ENCODE measurements at regions of chr2 and their contacts with region 1.

Region 1: GRCh38 chr2:172427256-172427989 is at the start of gene ITGA6:
- DNase-seq: peak; percentile 90
- H3K4me3 ChIP-seq: peak within 1 kb of the TSS; percentile 90
- H3K4me3 Mint-ChIP-seq: peak within 1 kb of the TSS; percentile 70
- H3K27ac Mint-ChIP-seq: peak within 1 kb of the TSS; percentile 84
- H3K4me1 ChIP-seq: peaks cover 25% of the 10 kb centered on the region
- H3K4me1 Mint-ChIP-seq: no peaks in the 10 kb centered on the region
- H3K27me3 ChIP-seq: no peaks in the 10 kb centered on the region
- H3K27me3 Mint-ChIP-seq: no peaks in the 10 kb centered on the region
- CTCF ChIP-seq: peak in 1 of 2 experiments; percentile 17
- total RNA-seq, gene ITGA6: 27.8 and 33.0 TPM in 2 replicates

Region 2: DNA sequence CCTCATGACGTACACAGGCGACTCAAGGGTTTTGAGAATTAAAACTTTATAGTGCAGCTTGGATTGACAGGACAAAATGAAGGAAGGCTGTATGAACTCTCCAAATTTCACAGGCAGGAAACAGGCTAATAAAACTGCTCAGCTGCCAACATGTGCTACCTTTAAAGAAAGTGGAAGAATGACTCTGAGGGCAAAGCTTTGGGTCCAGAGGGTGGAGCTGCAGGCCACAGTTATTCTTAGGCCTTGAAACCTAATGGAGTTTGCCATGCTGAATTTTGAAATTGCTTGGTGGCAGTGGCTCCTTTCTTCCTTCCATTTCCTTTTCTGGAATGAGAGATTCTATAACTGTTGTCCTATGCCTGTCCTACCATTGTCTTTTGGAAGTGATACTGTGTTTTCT is 470.4 kb before region 1 on chr2:
- CTCF ChIA-PET with region 1: no interaction called
- POLR2A ChIA-PET with region 1: no interaction called
- intact Hi-C with region 1: no loop called
- DNase-seq: peak in 1 of 2 experiments; percentile 15
- H3K4me3 ChIP-seq: no peak overlapping the region
- H3K4me3 Mint-ChIP-seq: no peak overlapping the region
- H3K27ac Mint-ChIP-seq: no peak overlapping the region
- H3K4me1 ChIP-seq: no peaks in the 10 kb centered on the region
- H3K4me1 Mint-ChIP-seq: no peaks in the 10 kb centered on the region
- H3K27me3 ChIP-seq: no peaks in the 10 kb centered on the region
- H3K27me3 Mint-ChIP-seq: no peaks in the 10 kb centered on the region
- CTCF ChIP-seq: no peak

Region 3: GRCh38 chr2:172242961-172243360 is 184.5 kb before region 1 on chr2:
- CTCF ChIA-PET with region 1: no interaction called
- POLR2A ChIA-PET with region 1: no interaction called
- intact Hi-C with region 1: loop called (anchors 1 kb)
- DNase-seq: no peak
- H3K4me3 ChIP-seq: no peak overlapping the region
- H3K4me3 Mint-ChIP-seq: no peak overlapping the region
- H3K27ac Mint-ChIP-seq: no peak overlapping the region
- H3K4me1 ChIP-seq: no peaks in the 10 kb centered on the region; the same call in 1 of the 2 replicates
- H3K4me1 Mint-ChIP-seq: no peaks in the 10 kb centered on the region
- H3K27me3 ChIP-seq: no peaks in the 10 kb centered on the region
- H3K27me3 Mint-ChIP-seq: peaks cover under 1% of the 10 kb centered on the region
- CTCF ChIP-seq: no peak

Region 4: GRCh38 chr2:172442072-172442895 is 14.9 kb after region 1 on chr2:
- CTCF ChIA-PET with region 1: interaction called, 13 read pairs
- POLR2A ChIA-PET with region 1: interaction called, 16 read pairs
- intact Hi-C with region 1: loop called (anchors 1 kb)
- DNase-seq: peak; percentile 76 to 89
- H3K4me3 ChIP-seq: no peak overlapping the region
- H3K4me3 Mint-ChIP-seq: peak overlapping the region; percentile 55
- H3K27ac Mint-ChIP-seq: peak overlapping the region; percentile 89
- H3K4me1 ChIP-seq: peaks cover 63% of the 10 kb centered on the region
- H3K4me1 Mint-ChIP-seq: peaks cover 37% of the 10 kb centered on the region
- H3K27me3 ChIP-seq: no peaks in the 10 kb centered on the region
- H3K27me3 Mint-ChIP-seq: no peaks in the 10 kb centered on the region
- CTCF ChIP-seq: no peak

Region 5: DNA sequence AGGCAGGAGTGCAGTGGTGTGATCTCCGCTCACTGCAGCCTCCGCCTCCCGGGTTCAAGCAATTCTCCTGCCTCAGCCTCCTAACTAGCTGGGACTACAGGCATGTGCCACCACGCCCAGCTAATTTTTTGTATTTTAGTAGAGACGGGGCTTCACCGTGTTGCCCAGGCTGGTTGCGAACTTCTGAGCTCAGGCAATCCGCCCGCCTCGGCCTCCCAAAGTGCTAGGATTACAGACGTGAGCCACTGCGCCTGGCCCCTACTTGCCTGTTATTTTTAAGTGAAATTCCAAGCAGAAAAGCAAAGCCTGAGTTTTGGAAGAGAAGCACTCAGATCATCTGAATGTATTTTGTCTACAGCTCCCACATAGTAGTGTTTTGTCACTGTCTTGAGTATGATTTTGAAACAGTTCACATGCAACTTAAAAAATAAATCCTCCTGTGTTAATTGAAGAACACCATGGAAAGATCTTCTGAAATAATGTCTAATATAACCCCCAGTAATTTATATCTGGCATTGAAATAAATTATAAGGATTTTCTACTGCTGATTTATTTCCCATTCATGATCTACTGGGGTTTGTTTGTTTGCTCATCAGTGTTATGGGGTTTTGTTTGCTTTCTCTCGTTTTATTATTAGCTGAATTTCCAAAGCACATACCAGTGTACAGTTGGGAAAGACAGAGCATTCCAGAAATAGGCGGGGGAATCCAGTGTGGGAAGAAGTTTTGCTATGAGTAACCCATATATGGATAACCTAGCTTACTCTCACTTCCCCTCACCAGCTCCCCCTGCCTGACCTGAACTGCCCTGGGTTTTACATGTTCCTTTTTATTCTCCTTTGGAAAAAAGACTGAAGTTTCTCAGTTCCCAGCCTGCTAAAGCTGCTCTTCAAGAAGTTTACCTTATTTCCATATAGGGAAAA is 568.2 kb after region 1 on chr2:
- CTCF ChIA-PET with region 1: no interaction called
- POLR2A ChIA-PET with region 1: no interaction called
- intact Hi-C with region 1: no loop called
- DNase-seq: peak; percentile 79 to 87
- H3K4me3 ChIP-seq: no peak overlapping the region
- H3K4me3 Mint-ChIP-seq: peak overlapping the region; percentile 15
- H3K27ac Mint-ChIP-seq: peak overlapping the region; percentile 69
- H3K4me1 ChIP-seq: peaks cover 16% of the 10 kb centered on the region
- H3K4me1 Mint-ChIP-seq: peaks cover 39% of the 10 kb centered on the region
- H3K27me3 ChIP-seq: no peaks in the 10 kb centered on the region
- H3K27me3 Mint-ChIP-seq: peaks cover under 1% of the 10 kb centered on the region
- CTCF ChIP-seq: peak; percentile 37